Spleen (tissue), 13 donors: ENCODE measurements at regions of chr3 and their contacts with region 1.

Region 1: DNA sequence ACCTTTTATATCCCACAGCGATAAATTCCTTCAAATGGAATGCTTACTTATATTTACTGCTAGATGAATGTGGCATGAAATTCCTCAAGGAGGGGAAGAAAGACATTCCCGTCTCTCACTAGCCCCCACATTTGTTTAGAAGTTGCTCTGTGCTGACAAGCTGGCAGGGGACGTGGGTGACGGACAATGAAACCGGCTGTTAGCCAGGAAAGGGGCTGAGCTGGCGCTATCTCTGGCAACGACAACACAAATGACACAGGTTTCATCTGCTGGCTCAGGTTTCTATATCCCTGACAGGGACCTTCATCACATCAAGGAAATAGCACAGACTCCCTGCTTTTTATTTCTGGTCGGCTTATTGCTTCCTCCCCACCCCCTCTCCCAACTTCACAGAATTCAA is 15.8 kb downstream of the RUVBL1 start:
- DNase-seq: no peak
- H3K4me3 ChIP-seq: no peak overlapping the region
- H3K27ac ChIP-seq: peak overlapping the region in 1 of 8 donors; percentile 6
- H3K4me1 ChIP-seq: peaks cover 0 to 12% (median 5%) of the 10 kb centered on the region in 6 donors
- H3K27me3 ChIP-seq: no peaks in the 10 kb centered on the region
- CTCF ChIP-seq: no peak
- POLR2A ChIP-seq: no peak

Region 2: DNA sequence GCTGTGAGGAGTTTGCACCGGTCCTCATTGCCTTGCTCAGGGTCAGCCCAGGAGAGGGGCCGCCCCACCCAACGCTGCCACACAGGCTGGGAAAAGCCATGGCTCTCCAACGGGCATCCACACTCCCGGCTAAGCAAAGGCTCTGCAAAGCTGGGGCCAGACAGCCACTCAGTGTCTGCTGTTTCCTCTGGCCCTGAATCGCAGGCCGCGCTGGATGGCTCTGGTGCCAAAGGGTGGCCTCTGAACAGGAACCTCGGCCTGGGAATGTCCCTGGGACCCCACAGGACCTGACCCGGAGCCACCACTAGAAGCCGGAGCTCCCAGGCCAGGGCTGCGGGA is 499.8 kb after region 1 on chr3:
- intact Hi-C with region 1: loop called (anchors 10 kb)
- DNase-seq: no peak
- H3K4me3 ChIP-seq: peak overlapping the region; percentile 18 to 74 (median 49)
- H3K27ac ChIP-seq: peak overlapping the region; percentile 53 to 84 (median 79)
- H3K4me1 ChIP-seq: peaks cover 0 to 48% (median 19%) of the 10 kb centered on the region in 6 donors
- H3K27me3 ChIP-seq: peaks cover 0 to 9% (median 0%) of the 10 kb centered on the region in 7 donors
- CTCF ChIP-seq: no peak
- POLR2A ChIP-seq: no peak